PC-3 (cell line): ENCODE measurements at regions of chr17 and their contacts with region 1.

Region 1: DNA sequence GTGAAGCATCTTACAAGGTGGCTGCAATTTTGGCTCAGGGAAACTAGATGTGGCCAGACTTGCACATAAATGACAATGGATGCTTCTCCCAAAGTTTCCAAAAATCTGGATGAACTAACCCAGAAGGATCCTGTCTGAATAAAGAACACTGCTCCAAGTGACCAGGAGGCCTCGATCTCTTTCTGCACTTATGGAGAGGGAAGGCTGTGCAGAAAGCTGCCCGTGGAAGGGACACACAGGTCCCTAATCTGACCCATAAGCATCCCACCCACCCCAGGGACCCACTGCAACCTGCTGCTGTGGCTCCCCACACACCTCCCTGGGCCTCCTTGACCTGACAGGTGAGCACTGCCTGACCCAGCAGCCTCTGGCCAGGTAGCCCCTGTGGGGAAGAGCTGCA is 74.6 kb upstream of the SEC14L1 start:
- DNase-seq: no peak
- ATAC-seq: 0 out of 2 replicates have a peak, but pooled peaks have one; percentile 7
- H3K4me3 ChIP-seq: no peak overlapping the region
- H3K27ac ChIP-seq: no peak overlapping the region
- H3K4me1 ChIP-seq: peaks cover 9% of the 10 kb centered on the region
- H3K27me3 ChIP-seq: no peaks in the 10 kb centered on the region
- CTCF ChIP-seq: no peak

Region 2: GRCh38 chr17:76816590-76817135 is 249.5 kb before region 1 on chr17:
- CTCF ChIA-PET with region 1: interaction called, 12 read pairs
- POLR2A ChIA-PET with region 1: no interaction called
- intact Hi-C with region 1: loop called (anchors 2 kb)
- DNase-seq: peak; percentile 79
- ATAC-seq: peak; percentile 94
- H3K4me3 ChIP-seq: no peak overlapping the region
- H3K27ac ChIP-seq: no peak overlapping the region
- H3K4me1 ChIP-seq: no peaks in the 10 kb centered on the region
- H3K27me3 ChIP-seq: no peaks in the 10 kb centered on the region
- CTCF ChIP-seq: peak; percentile 96

Region 3: DNA sequence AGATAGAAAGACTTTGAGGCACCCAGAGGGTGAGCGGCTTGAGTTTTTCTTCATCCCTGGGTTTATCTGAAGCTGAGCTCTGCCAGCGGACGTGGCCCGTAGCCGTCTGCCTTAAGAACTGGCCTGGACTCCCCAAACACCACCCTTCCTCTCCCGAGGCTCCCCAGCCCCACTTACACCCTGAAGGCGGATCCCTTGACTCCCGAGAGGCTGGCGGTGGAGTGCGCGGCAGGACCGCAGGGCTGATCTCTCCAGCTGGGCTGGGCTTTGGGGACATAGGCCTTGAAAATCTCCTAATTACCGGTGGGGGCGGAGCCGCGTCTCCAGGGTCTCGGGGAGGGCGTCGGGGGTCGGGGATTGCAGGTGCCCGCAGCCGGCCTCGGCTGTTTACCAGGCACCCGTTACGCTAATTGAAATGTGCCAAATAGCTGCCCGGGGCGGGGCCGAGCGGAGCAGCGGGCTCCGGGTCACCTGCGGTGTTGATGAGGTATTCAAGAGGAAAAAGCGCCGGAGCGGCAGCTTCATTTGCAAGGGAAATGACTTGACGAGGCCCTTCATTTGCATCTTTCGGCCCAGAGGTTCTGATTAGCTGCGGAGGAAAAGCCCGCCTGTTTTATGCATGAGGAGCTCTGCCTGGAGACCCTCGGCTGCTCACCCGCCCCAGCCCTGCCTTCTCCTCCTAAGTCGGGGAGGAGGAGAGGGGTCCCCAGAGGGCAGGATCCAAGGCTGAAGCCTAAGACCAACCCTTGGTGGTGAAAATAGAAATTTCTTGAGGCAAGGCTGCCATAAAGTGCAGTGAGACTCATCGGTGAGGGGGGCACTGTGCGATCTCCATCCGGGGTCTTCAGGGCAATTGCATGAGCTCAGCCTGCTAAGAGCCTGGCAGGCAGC is 97.2 kb before region 1 on chr17:
- CTCF ChIA-PET with region 1: no interaction called
- POLR2A ChIA-PET with region 1: no interaction called
- intact Hi-C with region 1: no loop called
- DNase-seq: peak; percentile 17
- ATAC-seq: peak; percentile 35
- H3K4me3 ChIP-seq: peak overlapping the region; percentile 61
- H3K27ac ChIP-seq: no peak overlapping the region
- H3K4me1 ChIP-seq: peaks cover 21% of the 10 kb centered on the region
- H3K27me3 ChIP-seq: no peaks in the 10 kb centered on the region; the same call in 1 of the 2 replicates
- CTCF ChIP-seq: no peak